HEK293 (cell line): ENCODE measurements at regions of chr12 and their contacts with region 1.

Region 1: GRCh38 chr12:53441040-53441833 is at the start of gene PRR13:
- H3K4me3 ChIP-seq: peak within 1 kb of the TSS; percentile 61
- H3K27ac ChIP-seq: peak within 1 kb of the TSS; percentile 79
- H3K4me1 ChIP-seq: 0 out of 2 replicates have a peak, but pooled peaks cover 2% of the 10 kb centered on the region
- CTCF ChIP-seq: no peak

Region 2: GRCh38 chr12:53451661-53452158 is 10.5 kb after region 1 on chr12 and contains the start of gene PCBP2:
- CTCF ChIA-PET with region 1: interaction called, 4 read pairs
- POLR2A ChIA-PET with region 1: interaction called, 11 read pairs
- H3K4me3 ChIP-seq: peak within 1 kb of the TSS; percentile 99
- H3K27ac ChIP-seq: peak within 1 kb of the TSS; percentile 98
- H3K4me1 ChIP-seq: peaks cover 3% of the 10 kb centered on the region
- CTCF ChIP-seq: peak; percentile 99

Region 3: DNA sequence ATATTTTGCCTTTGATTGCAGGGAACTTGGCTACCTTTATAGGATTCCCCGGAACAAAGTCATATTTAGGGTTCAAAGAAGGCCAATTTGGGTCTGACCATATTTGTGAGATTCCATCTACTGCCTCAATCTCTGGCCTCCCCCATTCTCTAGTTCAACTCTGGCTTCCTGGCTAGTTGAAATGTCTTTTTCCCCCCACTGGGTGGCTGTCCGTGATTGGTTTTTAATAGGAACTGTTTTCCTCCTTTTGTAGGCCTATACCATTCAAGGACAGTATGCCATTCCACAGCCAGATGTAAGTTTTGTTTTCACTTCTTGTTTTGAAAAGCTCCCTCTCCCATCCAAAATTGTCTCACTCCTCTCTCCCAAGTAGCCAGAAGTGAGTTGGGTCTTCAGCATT is 24.4 kb after region 1 on chr12:
- CTCF ChIA-PET with region 1: no interaction called
- POLR2A ChIA-PET with region 1: no interaction called
- H3K4me3 ChIP-seq: no peak overlapping the region
- H3K27ac ChIP-seq: no peak overlapping the region; the same call in 1 of the 2 replicates
- H3K4me1 ChIP-seq: no peaks in the 10 kb centered on the region
- CTCF ChIP-seq: no peak